CD4-positive, alpha-beta memory T cell (primary cell): ENCODE measurements at regions of chr12 and their contacts with region 1.

Region 1: GRCh38 chr12:89709157-89709994 is 738 bp upstream of the ATP2B1 start:
- DNase-seq: peak; percentile 97 to 99 (median 99)
- H3K4me3 ChIP-seq: peak overlapping the region; percentile 81 to 89
- H3K4me3 Mint-ChIP-seq: peak overlapping the region; percentile 90 to 96 (median 93)
- H3K27ac ChIP-seq: peak overlapping the region; percentile 95
- H3K27ac Mint-ChIP-seq: peak overlapping the region; percentile 96 to 99 (median 98)
- H3K4me1 ChIP-seq: peaks cover 41% of the 10 kb centered on the region
- H3K4me1 Mint-ChIP-seq: peaks cover 24 to 54% (median 34%) of the 10 kb centered on the region in 4 donors
- H3K27me3 ChIP-seq: no peaks in the 10 kb centered on the region
- H3K27me3 Mint-ChIP-seq: peaks cover 0 to 2% of the 10 kb centered on the region in 2 donors

Region 2: DNA sequence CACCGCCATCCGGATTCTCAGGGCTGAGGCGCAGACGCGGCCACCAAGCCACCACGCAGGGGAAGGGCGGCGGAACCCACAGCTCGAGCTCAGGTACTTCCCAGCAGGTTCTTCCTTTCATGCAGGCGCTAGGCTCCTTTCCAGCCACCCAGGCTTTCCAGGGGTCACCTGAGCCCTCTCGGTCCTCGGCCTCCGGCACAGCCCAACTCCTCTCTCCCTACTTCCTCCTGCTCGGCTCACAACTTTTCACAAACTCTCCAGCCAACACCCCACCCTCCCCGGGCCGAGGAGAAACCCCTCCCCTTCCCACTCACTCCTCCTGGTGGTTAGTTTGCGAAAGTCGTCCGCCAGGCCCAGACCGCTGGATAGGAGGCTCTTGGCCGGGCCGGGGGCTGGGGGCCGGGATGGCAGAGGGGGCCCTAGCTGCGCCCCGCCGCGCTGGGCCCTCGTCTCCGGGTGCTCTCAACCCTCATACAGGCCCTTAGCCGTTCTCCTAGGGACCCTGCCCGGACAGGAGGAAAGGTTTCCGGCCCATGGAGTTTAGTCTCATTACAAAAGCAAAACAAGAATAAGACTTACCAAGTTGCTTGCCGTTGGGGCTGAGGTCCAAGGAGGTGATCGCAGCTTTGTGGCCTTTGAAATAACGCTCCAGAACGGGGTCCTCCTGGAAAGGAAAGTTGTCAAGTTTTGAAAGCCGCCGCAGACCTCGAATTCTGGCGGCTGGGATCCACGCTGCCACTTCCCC is 184.7 kb before region 1 on chr12 and contains the start of gene GALNT4:
- CTCF ChIA-PET with region 1: no interaction called
- POLR2A ChIA-PET with region 1: interaction called, 29 read pairs
- intact Hi-C with region 1: loop called (anchors 1 kb)
- DNase-seq: peak; percentile 78 to 86 (median 80)
- H3K4me3 ChIP-seq: peak within 1 kb of the TSS; percentile 72 to 93
- H3K4me3 Mint-ChIP-seq: peak within 1 kb of the TSS; percentile 95 to 98 (median 98)
- H3K27ac ChIP-seq: peak within 1 kb of the TSS; percentile 87
- H3K27ac Mint-ChIP-seq: peak within 1 kb of the TSS; percentile 83 to 96 (median 95)
- H3K4me1 ChIP-seq: peaks cover 49% of the 10 kb centered on the region
- H3K4me1 Mint-ChIP-seq: peaks cover 34 to 57% (median 44%) of the 10 kb centered on the region in 4 donors
- H3K27me3 ChIP-seq: no peaks in the 10 kb centered on the region
- H3K27me3 Mint-ChIP-seq: no peaks in the 10 kb centered on the region
- total RNA-seq, gene GALNT4: 7.2 to 7.6 TPM

Region 3: GRCh38 chr12:89663577-89664357 is 45.6 kb before region 1 on chr12:
- CTCF ChIA-PET with region 1: interaction called, 3 read pairs
- POLR2A ChIA-PET with region 1: interaction called, 31 read pairs
- intact Hi-C with region 1: loop called (anchors 5 kb)
- DNase-seq: peak in 1 of 5 donors; percentile 60
- H3K4me3 ChIP-seq: no peak overlapping the region
- H3K4me3 Mint-ChIP-seq: peak overlapping the region in 6 of 8 donors; percentile 25 to 65 (median 54)
- H3K27ac ChIP-seq: peak overlapping the region; percentile 22
- H3K27ac Mint-ChIP-seq: peak overlapping the region; percentile 11 to 87 (median 69)
- H3K4me1 ChIP-seq: peaks cover 88% of the 10 kb centered on the region
- H3K4me1 Mint-ChIP-seq: peaks cover 60 to 80% (median 72%) of the 10 kb centered on the region in 4 donors
- H3K27me3 ChIP-seq: no peaks in the 10 kb centered on the region
- H3K27me3 Mint-ChIP-seq: no peaks in the 10 kb centered on the region

Region 4: GRCh38 chr12:89695100-89695499 is 14.3 kb before region 1 on chr12:
- CTCF ChIA-PET with region 1: no interaction called
- POLR2A ChIA-PET with region 1: interaction called, 30 read pairs
- intact Hi-C with region 1: no loop called
- DNase-seq: no peak
- H3K4me3 ChIP-seq: no peak overlapping the region
- H3K4me3 Mint-ChIP-seq: peak overlapping the region in 2 of 8 donors; percentile 46 to 49
- H3K27ac ChIP-seq: no peak overlapping the region
- H3K27ac Mint-ChIP-seq: peak overlapping the region in 1 of 7 donors; percentile 27
- H3K4me1 ChIP-seq: peaks cover 96% of the 10 kb centered on the region
- H3K4me1 Mint-ChIP-seq: peaks cover 69 to 94% (median 81%) of the 10 kb centered on the region in 4 donors
- H3K27me3 ChIP-seq: no peaks in the 10 kb centered on the region
- H3K27me3 Mint-ChIP-seq: no peaks in the 10 kb centered on the region

Region 5: DNA sequence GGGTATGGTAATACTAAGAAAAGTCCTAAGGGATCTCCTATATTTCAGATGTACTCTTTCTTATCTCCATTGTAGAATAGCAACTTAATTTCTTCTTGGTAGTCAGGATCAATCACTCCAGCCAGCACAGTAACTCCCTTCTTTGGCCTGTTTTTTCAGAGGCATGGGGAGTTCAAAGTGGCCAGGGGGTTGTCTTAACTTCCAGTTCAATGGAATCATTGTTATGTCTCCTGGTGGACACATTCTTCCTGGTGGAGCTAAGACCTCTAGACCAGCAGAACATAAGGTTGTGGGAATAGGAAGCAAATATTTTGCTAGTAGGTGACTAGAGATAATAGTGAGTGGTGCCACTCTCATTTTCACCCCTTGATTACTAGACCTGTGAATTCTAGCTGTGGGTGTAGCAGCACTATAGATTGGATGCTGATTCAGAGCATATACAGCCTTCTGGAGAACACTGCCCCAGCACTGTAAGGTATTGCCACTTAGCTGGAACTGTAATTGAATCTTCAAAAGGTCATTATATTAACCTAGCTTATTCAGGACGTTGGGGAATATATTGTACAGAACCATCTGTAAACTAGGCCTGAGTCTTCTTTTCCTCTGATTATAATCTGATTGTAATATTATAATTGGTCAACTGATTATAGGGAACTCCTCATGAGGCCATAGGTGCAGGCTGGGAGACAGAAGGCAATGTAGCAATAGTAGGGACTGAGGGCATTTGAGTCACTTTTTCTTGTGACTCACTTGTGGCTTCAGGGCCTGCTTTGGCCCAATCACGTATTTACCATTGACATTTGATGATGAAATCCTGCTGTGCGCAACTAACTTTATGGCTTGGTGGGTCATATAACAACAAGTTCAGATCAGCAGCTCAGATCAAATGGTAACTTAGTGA is 59.5 kb after region 1 on chr12:
- CTCF ChIA-PET with region 1: interaction called, 6 read pairs
- POLR2A ChIA-PET with region 1: interaction called, 83 read pairs
- intact Hi-C with region 1: no loop called
- DNase-seq: no peak
- H3K4me3 ChIP-seq: no peak overlapping the region
- H3K4me3 Mint-ChIP-seq: peak overlapping the region in 2 of 8 donors; percentile 15 to 20
- H3K27ac ChIP-seq: no peak overlapping the region
- H3K27ac Mint-ChIP-seq: peak overlapping the region in 3 of 7 donors; percentile 9 to 46 (median 15)
- H3K4me1 ChIP-seq: peaks cover 42% of the 10 kb centered on the region
- H3K4me1 Mint-ChIP-seq: peaks cover 40 to 78% (median 58%) of the 10 kb centered on the region in 4 donors
- H3K27me3 ChIP-seq: no peaks in the 10 kb centered on the region
- H3K27me3 Mint-ChIP-seq: no peaks in the 10 kb centered on the region

Region 6: GRCh38 chr12:89943463-89943862 is 234.1 kb after region 1 on chr12:
- CTCF ChIA-PET with region 1: no interaction called
- POLR2A ChIA-PET with region 1: interaction called, 104 read pairs
- intact Hi-C with region 1: no loop called
- DNase-seq: no peak
- H3K4me3 ChIP-seq: no peak overlapping the region
- H3K4me3 Mint-ChIP-seq: no peak overlapping the region
- H3K27ac ChIP-seq: peak overlapping the region; percentile 41
- H3K27ac Mint-ChIP-seq: peak overlapping the region; percentile 2 to 97 (median 87)
- H3K4me1 ChIP-seq: peaks cover 38% of the 10 kb centered on the region
- H3K4me1 Mint-ChIP-seq: peaks cover 37 to 58% (median 47%) of the 10 kb centered on the region in 4 donors
- H3K27me3 ChIP-seq: no peaks in the 10 kb centered on the region
- H3K27me3 Mint-ChIP-seq: no peaks in the 10 kb centered on the region

Region 7: DNA sequence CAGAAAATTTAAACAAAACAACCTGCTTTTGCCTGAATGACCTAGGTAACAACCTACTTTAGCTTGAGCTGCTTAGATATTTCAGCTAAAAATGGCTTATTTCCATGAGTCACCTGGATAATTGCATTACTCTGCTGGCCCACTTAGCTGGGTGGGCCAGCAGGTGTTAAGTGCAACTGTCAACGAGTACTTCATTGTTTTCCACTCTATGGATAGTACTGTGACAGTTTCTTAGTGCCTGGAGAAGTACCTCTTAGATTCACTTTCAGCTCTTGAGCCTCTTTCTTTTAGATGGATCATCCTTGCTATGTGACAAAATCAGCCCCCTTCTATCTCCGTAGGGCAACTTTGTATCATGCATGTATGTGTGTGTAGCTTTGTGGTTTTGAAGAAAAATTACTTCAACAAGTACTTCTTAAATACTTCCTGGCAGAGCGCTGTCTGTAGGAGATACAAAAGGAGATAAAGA is 367.5 kb after region 1 on chr12:
- CTCF ChIA-PET with region 1: interaction called, 3 read pairs
- POLR2A ChIA-PET with region 1: interaction called, 10 read pairs
- intact Hi-C with region 1: no loop called
- DNase-seq: peak in 2 of 5 donors; percentile 14
- H3K4me3 ChIP-seq: no peak overlapping the region
- H3K4me3 Mint-ChIP-seq: peak overlapping the region; percentile 3 to 76 (median 58)
- H3K27ac ChIP-seq: no peak overlapping the region
- H3K27ac Mint-ChIP-seq: peak overlapping the region; percentile 32 to 85 (median 70)
- H3K4me1 ChIP-seq: peaks cover 29% of the 10 kb centered on the region
- H3K4me1 Mint-ChIP-seq: peaks cover 22 to 33% (median 28%) of the 10 kb centered on the region in 4 donors
- H3K27me3 ChIP-seq: no peaks in the 10 kb centered on the region
- H3K27me3 Mint-ChIP-seq: no peaks in the 10 kb centered on the region